A549 (cell line): ENCODE measurements at regions of chr1 and their contacts with region 1.

Region 1: GRCh38 chr1:36099681-36100341 is 11.1 kb downstream of the ADPRS start:
- DNase-seq: peak; percentile 65 to 69
- ATAC-seq: peak; percentile 84 to 92
- H3K4me3 ChIP-seq: no peak overlapping the region
- H3K27ac ChIP-seq: peak overlapping the region; percentile 51 to 80; a peak in 4 of 6 replicates
- H3K4me1 ChIP-seq: no peaks in the 10 kb centered on the region
- CTCF ChIP-seq: peak; percentile 86
- EP300 ChIP-seq: no peak
- POLR2A ChIP-seq: no peak
- RAD21 ChIP-seq: peak; percentile 88 to 92

Region 2: GRCh38 chr1:35854989-35855700 is 244.7 kb before region 1 on chr1:
- CTCF ChIA-PET with region 1: no interaction called
- POLR2A ChIA-PET with region 1: interaction called, 10 read pairs
- DNase-seq: no peak
- ATAC-seq: no peak
- H3K4me3 ChIP-seq: no peak overlapping the region
- H3K27ac ChIP-seq: no peak overlapping the region
- H3K4me1 ChIP-seq: no peaks in the 10 kb centered on the region
- CTCF ChIP-seq: 0 out of 3 replicates have a peak, but pooled peaks have one; percentile 4
- EP300 ChIP-seq: no peak
- POLR2A ChIP-seq: no peak
- RAD21 ChIP-seq: no peak

Region 3: DNA sequence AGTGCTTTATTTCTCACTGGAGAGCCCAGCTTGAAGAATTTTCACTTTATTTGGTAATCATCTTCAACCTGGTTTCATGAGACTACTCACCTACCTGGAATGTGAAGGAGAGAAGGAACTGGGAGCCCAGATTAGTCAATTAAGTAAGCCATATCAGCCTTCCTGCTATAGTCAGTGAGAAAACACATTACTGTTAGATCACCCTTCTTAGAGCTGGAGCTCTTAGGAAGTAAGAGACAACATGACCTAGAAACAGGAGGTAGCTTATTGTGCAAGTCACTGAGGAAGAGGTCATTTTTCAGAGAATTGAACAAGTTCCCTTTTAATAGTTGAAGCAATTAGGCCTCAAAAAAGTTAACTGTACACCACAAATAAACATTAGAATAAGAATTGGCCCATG is 65.1 kb before region 1 on chr1:
- CTCF ChIA-PET with region 1: no interaction called
- POLR2A ChIA-PET with region 1: no interaction called
- DNase-seq: peak; percentile 2 to 21
- ATAC-seq: peak in 1 of 2 experiments; percentile 33; a peak in 2 of 6 replicates
- H3K4me3 ChIP-seq: no peak overlapping the region
- H3K27ac ChIP-seq: no peak overlapping the region
- H3K4me1 ChIP-seq: peaks cover 6% of the 10 kb centered on the region; the same call in 1 of the 3 replicates
- CTCF ChIP-seq: no peak
- EP300 ChIP-seq: no peak
- POLR2A ChIP-seq: no peak
- RAD21 ChIP-seq: no peak

Region 4: GRCh38 chr1:36076979-36077573 is 22.7 kb before region 1 on chr1:
- CTCF ChIA-PET with region 1: no interaction called
- POLR2A ChIA-PET with region 1: no interaction called
- DNase-seq: no peak
- ATAC-seq: no peak
- H3K4me3 ChIP-seq: no peak overlapping the region
- H3K27ac ChIP-seq: no peak overlapping the region
- H3K4me1 ChIP-seq: no peaks in the 10 kb centered on the region
- CTCF ChIP-seq: no peak
- EP300 ChIP-seq: no peak
- POLR2A ChIP-seq: no peak
- RAD21 ChIP-seq: no peak

Region 5: GRCh38 chr1:36088575-36089443 is 11.0 kb before region 1 on chr1 and contains the start of gene ADPRS:
- CTCF ChIA-PET with region 1: interaction called, 11 read pairs
- POLR2A ChIA-PET with region 1: no interaction called
- DNase-seq: peak; percentile 72 to 90
- ATAC-seq: peak; percentile 92
- H3K4me3 ChIP-seq: peak within 1 kb of the TSS; percentile 98
- H3K27ac ChIP-seq: peak within 1 kb of the TSS; percentile 89 to 94
- H3K4me1 ChIP-seq: peaks cover 6% of the 10 kb centered on the region
- CTCF ChIP-seq: peak; percentile 80
- EP300 ChIP-seq: no peak
- POLR2A ChIP-seq: peak; percentile 95
- RAD21 ChIP-seq: peak in 1 of 2 experiments; percentile 42; a peak in 2 of 5 replicates
- polyA plus RNA-seq, gene ADPRS: 14.3 and 14.6 TPM in 2 replicates

Region 6: DNA sequence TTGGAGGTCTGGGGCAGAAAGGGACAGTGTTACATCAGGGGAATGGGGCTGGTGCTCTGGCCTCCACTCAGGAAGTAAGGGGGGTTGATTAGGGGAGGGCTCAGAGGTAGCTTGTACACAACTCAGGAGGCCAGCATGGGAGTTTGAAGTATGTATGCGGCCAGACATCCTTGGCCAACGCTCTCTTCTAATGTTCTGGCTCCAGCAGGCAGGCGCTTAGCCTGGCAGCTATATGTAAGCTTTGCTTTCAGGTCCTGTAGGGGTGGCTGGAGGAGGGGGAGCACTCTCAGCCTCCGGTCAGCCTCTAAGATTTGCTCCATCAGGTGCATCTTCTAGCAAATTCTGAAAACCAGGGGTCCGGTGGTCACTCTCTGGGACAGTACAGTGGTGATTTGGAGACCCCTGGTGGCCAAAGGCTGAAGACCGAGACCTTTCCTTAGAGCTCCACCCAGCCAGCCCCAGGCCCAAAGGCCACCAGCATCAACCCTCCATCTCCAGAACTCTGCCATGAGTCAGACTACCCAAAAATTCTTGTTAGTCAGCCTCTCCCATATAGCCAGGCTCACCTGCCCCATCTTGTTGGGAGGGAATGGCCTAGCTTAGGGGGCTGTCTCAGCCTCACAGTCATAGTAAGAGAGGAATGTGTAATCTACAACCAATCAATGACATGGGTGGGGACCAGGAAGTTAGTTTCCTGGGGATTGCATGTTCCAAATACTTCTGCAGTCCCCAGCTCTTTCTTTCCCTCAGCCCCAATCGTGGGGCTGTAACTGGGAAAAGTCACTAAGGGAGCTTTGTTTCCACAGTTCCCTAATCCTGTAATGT is 34.9 kb after region 1 on chr1:
- CTCF ChIA-PET with region 1: interaction called, 147 read pairs
- POLR2A ChIA-PET with region 1: no interaction called
- DNase-seq: peak; percentile 34 to 68
- ATAC-seq: peak; percentile 77 to 94
- H3K4me3 ChIP-seq: no peak overlapping the region
- H3K27ac ChIP-seq: no peak overlapping the region
- H3K4me1 ChIP-seq: peaks cover 6% of the 10 kb centered on the region
- CTCF ChIP-seq: peak; percentile 58
- EP300 ChIP-seq: no peak
- POLR2A ChIP-seq: no peak
- RAD21 ChIP-seq: peak; percentile 53 to 66; a peak in 4 of 5 replicates

Region 7: GRCh38 chr1:36486436-36487335 is 386.9 kb after region 1 on chr1:
- CTCF ChIA-PET with region 1: no interaction called
- POLR2A ChIA-PET with region 1: no interaction called
- DNase-seq: peak; percentile 28 to 93
- ATAC-seq: peak; percentile 88 to 89
- H3K4me3 ChIP-seq: no peak overlapping the region
- H3K27ac ChIP-seq: peak overlapping the region; percentile 81 to 84
- H3K4me1 ChIP-seq: peaks cover 21% of the 10 kb centered on the region
- CTCF ChIP-seq: no peak
- EP300 ChIP-seq: peak; percentile 37 to 43; a peak in 2 of 5 replicates
- POLR2A ChIP-seq: no peak
- RAD21 ChIP-seq: no peak